ENCODE measurements at regions of chr3 and their contacts with region 1.

Region 1: DNA sequence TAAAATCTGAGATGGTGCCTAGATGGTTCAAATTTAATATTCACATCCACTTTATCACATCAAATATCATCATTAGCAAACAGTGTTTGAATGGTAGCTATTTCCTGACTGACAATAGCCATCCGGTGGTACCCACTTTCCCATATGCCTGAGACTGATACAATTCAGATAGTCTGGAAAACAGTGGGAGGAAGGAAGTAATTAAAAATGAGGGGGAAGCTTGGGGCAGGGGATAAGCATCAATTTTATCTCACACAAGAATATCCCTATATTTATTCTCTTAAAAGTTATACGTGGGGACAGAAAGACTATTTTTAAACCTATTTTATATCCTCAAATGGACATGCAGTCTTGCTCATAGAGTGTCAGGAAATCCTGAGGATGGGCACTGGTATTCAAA is 122.5 kb upstream of the GAP43 start:
- DNase-seq: no peak
- ATAC-seq: no peak
- H3K4me3 ChIP-seq: no peak overlapping the region
- H3K27ac ChIP-seq: no peak overlapping the region
- H3K4me1 ChIP-seq: no peaks in the 10 kb centered on the region
- H3K27me3 ChIP-seq: no peaks in the 10 kb centered on the region
- CTCF ChIP-seq: no peak

Region 2: DNA sequence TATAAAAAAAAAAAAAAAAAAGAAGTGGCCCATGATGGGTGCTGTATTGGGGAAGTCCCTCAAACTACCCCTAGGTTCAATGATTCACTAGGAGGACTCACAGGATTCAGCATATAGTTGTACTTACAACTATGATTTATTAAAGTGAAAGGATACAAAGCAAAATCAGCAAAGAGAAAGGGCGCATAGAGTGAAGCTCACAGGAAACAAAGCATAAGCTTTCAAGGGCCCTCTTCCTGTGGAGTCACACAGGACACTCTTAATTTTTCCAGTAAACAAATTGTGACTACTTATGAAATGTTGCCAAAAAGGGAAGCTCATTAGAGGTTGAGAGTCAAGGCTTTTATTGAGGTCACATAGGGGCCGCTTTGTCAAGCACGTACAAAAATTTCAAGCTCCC is 31.1 kb before region 1 on chr3:
- CTCF ChIA-PET with region 1: no interaction called
- POLR2A ChIA-PET with region 1: no interaction called
- intact Hi-C with region 1: loop called (anchors 2 kb)
- DNase-seq: no peak
- ATAC-seq: no peak
- H3K4me3 ChIP-seq: no peak overlapping the region
- H3K27ac ChIP-seq: no peak overlapping the region
- H3K4me1 ChIP-seq: no peaks in the 10 kb centered on the region
- H3K27me3 ChIP-seq: peaks cover 25% of the 10 kb centered on the region
- CTCF ChIP-seq: no peak